HCT116 (cell line): ENCODE measurements at regions of chr6 and their contacts with region 1.

Region 1: DNA sequence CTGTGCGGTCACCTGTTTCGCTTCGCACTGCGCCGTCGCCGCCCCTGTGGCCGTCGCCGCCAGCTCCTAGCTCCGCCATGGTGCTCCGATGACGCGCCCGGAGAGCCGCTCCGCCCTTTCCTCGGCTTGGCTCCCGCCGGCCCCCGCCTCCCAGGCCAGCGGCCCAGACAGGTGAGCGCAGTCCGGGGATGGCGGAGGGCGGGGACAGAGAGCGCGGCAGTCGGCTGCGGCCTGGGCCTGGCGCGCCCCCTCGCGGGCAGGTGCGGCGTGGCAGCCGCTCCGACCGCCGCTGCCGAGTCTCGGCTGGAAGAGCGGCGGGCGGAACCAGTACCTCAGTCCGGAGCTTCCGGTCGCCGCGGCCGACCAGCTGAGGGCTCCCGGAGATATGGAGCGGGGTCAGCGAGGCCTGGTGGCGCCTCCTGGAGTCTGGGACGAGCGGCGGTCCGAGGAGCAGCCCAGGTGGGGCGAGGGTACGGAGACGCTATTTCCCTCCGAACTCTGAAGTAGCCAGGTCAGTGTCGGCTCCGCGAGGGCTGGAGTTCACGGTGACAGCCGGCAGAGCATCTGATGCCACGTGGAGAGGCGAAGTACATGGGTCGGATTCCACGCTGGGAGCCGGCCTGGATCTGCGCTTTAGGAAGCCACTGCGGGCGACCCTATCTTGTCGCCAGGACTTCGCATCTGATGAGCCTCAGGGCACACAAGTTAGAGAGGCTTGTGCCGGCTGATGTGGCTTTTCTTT is at the start of gene MAP7:
- DNase-seq: peak; percentile 75
- ATAC-seq: peak; percentile 96
- H3K4me3 ChIP-seq: peak within 1 kb of the TSS; percentile 75 to 79
- H3K27ac ChIP-seq: peak within 1 kb of the TSS; percentile 69
- H3K4me1 ChIP-seq: peaks cover 6 to 17% of the 10 kb centered on the region in 2 experiments; a peak in 3 of 4 replicates
- H3K27me3 ChIP-seq: no peaks in the 10 kb centered on the region
- CTCF ChIP-seq: peak; percentile 63 to 83 (median 81)
- POLR2A ChIP-seq: no peak
- RAD21 ChIP-seq: peak; percentile 73
- total RNA-seq, gene MAP7: 35.5 TPM

Region 2: DNA sequence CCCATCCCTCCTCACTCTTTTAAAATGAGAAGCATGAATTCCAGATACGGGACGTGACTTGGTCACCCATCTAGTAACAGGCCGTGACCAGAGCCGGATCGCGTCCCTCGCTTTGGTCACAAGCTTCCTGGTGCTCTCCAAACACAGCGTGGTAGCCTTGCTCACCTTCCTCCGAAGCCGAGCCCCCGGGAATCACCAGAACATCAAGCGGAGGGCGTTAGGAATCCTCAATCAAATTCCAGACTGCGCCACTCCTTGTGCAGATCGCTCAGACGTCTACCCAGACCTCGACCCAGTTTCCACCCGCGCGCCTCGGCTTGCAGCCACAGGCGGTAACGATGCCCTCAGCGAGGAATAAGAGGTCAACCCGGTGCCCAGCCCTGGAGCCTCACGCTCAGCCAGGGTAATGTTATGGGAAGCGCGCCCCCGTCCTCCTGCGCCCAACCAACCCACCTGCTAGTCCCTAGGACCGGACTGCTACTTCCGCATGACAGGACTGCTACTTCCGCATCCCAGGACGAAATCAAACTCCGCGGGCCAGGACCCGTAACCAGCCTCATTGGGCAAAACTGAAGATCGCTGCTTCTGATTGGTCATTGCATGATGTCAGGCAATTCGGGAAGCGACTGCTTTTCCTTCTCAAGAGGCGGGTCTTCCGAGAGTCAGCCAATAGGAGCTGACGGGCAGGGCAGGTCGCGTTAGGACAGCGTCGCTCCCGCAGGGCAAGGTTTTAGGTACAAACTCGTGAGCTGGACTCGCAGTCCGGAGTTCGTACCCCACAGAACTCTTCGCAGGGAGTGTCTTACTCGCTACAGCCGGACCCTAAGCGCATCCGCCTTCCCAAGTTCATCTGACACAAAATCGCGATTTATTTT is 300.5 kb before region 1 on chr6 and contains the start of gene MTFR2:
- CTCF ChIA-PET with region 1: interaction called, 6 read pairs
- POLR2A ChIA-PET with region 1: no interaction called
- RAD21 ChIA-PET with region 1: no interaction called
- intact Hi-C with region 1: loop called (anchors 1 kb)
- DNase-seq: peak; percentile 98
- ATAC-seq: peak; percentile 90
- H3K4me3 ChIP-seq: peak within 1 kb of the TSS; percentile 90 to 92
- H3K27ac ChIP-seq: peak within 1 kb of the TSS; percentile 45
- H3K4me1 ChIP-seq: peaks cover 3 to 16% of the 10 kb centered on the region in 2 experiments
- H3K27me3 ChIP-seq: no peaks in the 10 kb centered on the region
- CTCF ChIP-seq: no peak
- POLR2A ChIP-seq: peak; percentile 82
- RAD21 ChIP-seq: no peak
- total RNA-seq, gene MTFR2: 13.2 TPM

Region 3: GRCh38 chr6:136289579-136290409 is 260.7 kb before region 1 on chr6 and contains the start of gene BCLAF1:
- CTCF ChIA-PET with region 1: interaction called, 3 read pairs
- POLR2A ChIA-PET with region 1: interaction called, 6 read pairs
- RAD21 ChIA-PET with region 1: no interaction called
- intact Hi-C with region 1: loop called (anchors 5 kb)
- DNase-seq: peak; percentile 97
- ATAC-seq: peak; percentile 93
- H3K4me3 ChIP-seq: peak within 1 kb of the TSS; percentile 81 to 99
- H3K27ac ChIP-seq: peak within 1 kb of the TSS; percentile 98
- H3K4me1 ChIP-seq: peaks cover 9 to 24% of the 10 kb centered on the region in 2 experiments
- H3K27me3 ChIP-seq: no peaks in the 10 kb centered on the region
- CTCF ChIP-seq: no peak
- POLR2A ChIP-seq: peak; percentile 88
- RAD21 ChIP-seq: no peak
- total RNA-seq, gene BCLAF1: 159 TPM

Region 4: DNA sequence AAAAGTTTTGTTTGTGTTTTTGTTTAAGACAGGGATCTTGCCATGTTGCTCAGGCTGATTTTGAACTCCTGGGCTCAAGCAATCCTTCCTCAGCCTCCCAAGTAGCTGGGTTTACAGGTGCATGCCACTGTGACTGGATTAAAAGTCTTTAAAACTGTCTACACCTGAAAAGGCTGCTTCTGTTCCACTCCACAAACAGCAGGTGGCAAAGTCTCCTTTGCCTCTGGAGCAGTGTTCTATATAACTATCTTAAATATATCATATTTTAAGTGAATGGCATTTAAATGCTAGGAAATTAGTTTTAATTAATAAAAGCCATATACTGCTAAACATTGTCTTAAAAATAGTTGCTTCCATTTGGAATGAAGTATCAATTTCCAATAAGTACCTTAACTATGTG is 171.6 kb before region 1 on chr6:
- CTCF ChIA-PET with region 1: interaction called, 5 read pairs
- POLR2A ChIA-PET with region 1: no interaction called
- RAD21 ChIA-PET with region 1: no interaction called
- intact Hi-C with region 1: loop called (anchors 5 kb)
- DNase-seq: no peak
- ATAC-seq: no peak
- H3K4me3 ChIP-seq: no peak overlapping the region
- H3K27ac ChIP-seq: no peak overlapping the region
- H3K4me1 ChIP-seq: no peaks in the 10 kb centered on the region
- H3K27me3 ChIP-seq: no peaks in the 10 kb centered on the region
- CTCF ChIP-seq: peak in 1 of 3 experiments; percentile 47; a peak in 2 of 6 replicates
- POLR2A ChIP-seq: no peak
- RAD21 ChIP-seq: peak; percentile 56

Region 5: DNA sequence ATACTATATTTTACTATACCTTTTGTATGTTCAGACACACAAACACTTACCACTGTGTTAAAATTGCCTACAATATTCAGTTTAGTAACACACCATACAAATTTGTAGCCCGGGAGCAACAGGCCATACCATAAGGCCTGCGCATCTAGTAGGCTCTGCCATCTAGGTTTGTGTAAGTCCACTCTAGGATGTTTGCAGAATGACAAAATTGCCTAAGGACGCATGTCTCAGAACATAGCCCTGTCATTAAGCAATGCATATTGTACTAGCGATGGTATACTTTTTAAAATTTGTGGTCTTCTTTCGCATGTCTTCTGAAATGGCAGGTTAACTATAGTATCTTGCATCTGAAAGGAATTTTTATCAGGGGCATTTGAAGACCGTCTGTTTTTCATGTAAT is 26.3 kb after region 1 on chr6:
- CTCF ChIA-PET with region 1: no interaction called
- POLR2A ChIA-PET with region 1: no interaction called
- RAD21 ChIA-PET with region 1: no interaction called
- intact Hi-C with region 1: no loop called
- DNase-seq: no peak
- ATAC-seq: no peak
- H3K4me3 ChIP-seq: no peak overlapping the region
- H3K27ac ChIP-seq: no peak overlapping the region
- H3K4me1 ChIP-seq: no peaks in the 10 kb centered on the region
- H3K27me3 ChIP-seq: no peaks in the 10 kb centered on the region
- CTCF ChIP-seq: no peak
- POLR2A ChIP-seq: no peak
- RAD21 ChIP-seq: no peak

Region 6: GRCh38 chr6:136640134-136640915 is 89.8 kb after region 1 on chr6:
- CTCF ChIA-PET with region 1: no interaction called
- POLR2A ChIA-PET with region 1: no interaction called
- RAD21 ChIA-PET with region 1: no interaction called
- intact Hi-C with region 1: no loop called
- DNase-seq: no peak
- ATAC-seq: no peak
- H3K4me3 ChIP-seq: no peak overlapping the region
- H3K27ac ChIP-seq: no peak overlapping the region
- H3K4me1 ChIP-seq: peaks cover 3 to 9% of the 10 kb centered on the region in 2 experiments; a peak in 3 of 4 replicates
- H3K27me3 ChIP-seq: no peaks in the 10 kb centered on the region
- CTCF ChIP-seq: no peak
- POLR2A ChIP-seq: no peak
- RAD21 ChIP-seq: no peak

Region 7: GRCh38 chr6:136792410-136793262 is 242.1 kb after region 1 on chr6 and contains the start of gene MAP3K5:
- CTCF ChIA-PET with region 1: interaction called, 16 read pairs
- POLR2A ChIA-PET with region 1: no interaction called
- RAD21 ChIA-PET with region 1: no interaction called
- intact Hi-C with region 1: no loop called
- DNase-seq: peak; percentile 77
- ATAC-seq: peak; percentile 87
- H3K4me3 ChIP-seq: peak within 1 kb of the TSS; percentile 72 to 88
- H3K27ac ChIP-seq: peak within 1 kb of the TSS; percentile 88
- H3K4me1 ChIP-seq: peaks cover 21 to 37% of the 10 kb centered on the region in 2 experiments
- H3K27me3 ChIP-seq: no peaks in the 10 kb centered on the region
- CTCF ChIP-seq: peak; percentile 78 to 92 (median 83)
- POLR2A ChIP-seq: peak; percentile 48
- RAD21 ChIP-seq: peak; percentile 93
- total RNA-seq, gene MAP3K5: 11.8 TPM

Region 8: DNA sequence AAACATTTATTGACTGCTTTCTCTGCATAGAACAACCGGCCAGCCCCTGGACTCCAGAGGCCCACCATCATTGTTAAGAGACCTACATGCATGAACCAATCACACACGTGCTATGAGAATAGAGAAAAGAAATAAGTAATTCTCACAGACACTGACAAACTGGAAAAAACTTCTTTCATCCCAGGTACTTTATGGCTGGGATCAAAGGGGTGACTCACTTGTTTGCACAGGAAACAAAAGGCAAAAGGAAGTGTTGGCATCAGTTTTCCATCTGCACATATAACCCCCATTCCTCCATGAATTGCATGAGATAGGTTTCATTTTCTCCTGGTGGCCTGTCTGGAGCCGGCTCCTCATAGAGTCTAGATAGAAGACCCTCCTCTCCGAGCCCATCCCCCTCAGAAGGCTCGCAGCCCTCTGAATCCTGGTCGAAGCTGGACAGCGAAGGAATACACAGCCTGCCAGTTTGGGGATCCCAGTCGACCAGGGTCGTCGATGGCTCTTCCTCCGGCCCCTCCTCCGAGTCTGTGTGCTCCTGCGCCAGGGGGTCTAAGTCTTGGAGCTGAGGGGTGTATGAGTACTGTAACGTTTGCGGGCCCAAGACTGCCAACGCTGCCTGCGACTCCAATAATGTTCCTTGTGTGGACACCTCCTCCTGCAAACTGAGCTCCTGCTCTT is 450.9 kb after region 1 on chr6:
- CTCF ChIA-PET with region 1: no interaction called
- POLR2A ChIA-PET with region 1: no interaction called
- RAD21 ChIA-PET with region 1: no interaction called
- intact Hi-C with region 1: no loop called
- DNase-seq: peak; percentile 74
- ATAC-seq: peak; percentile 82
- H3K4me3 ChIP-seq: peak overlapping the region in 1 of 2 experiments; percentile 35; a peak in 2 of 4 replicates
- H3K27ac ChIP-seq: no peak overlapping the region
- H3K4me1 ChIP-seq: peaks cover 21 to 33% of the 10 kb centered on the region in 2 experiments
- H3K27me3 ChIP-seq: no peaks in the 10 kb centered on the region
- CTCF ChIP-seq: no peak
- POLR2A ChIP-seq: no peak
- RAD21 ChIP-seq: no peak